ENCODE measurements at regions of chr3 and their contacts with region 1.

Region 1: DNA sequence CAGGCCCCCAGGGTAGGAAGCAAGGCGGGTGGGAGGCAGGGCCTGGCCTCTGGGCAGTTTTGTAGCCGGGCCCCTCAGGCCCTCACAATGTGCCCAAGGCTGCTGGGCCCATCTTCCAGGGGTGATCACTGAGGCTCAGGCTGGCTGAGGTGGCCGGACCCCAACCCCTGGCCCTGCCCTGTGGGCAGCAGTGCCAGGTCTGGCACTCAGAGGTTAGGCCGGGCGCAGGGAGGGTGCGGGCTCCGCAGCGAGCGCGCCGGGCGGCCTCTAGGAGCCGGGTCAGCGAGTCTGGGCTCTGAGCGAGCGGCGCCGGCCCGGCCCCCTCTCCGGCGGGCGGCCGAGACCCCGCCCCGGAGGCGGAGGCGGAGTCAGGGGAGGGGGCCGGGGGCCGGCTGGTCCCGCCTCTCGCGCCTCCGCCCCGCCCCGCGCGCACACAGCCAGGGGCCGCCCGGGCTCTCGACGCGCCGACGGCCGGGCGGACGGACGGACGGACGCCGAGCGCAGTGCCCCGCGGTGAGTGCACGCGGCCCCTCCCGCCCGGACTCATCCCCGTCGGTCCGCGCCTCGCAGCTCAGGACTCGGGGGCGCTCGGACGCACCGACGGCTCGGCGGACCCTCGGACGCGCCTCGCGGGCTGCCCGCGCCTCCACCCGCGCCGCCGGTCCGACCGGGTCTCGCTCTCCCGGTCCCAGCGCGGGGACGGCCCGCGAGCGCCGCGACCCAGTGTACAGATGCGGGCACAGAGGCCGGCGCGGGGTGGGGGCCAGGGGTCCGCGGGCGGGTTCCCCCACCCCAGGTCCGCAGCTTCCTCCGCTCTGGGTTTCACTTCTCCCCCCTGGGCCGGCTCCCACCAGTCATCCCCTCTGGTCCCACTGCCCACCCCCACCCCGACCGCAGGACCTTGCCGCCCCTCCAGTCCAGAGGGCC is at the start of gene FBLN2:
- DNase-seq: no peak
- ATAC-seq: peak; percentile 83
- total RNA-seq, gene FBLN2: 81.1 TPM

Region 2: DNA sequence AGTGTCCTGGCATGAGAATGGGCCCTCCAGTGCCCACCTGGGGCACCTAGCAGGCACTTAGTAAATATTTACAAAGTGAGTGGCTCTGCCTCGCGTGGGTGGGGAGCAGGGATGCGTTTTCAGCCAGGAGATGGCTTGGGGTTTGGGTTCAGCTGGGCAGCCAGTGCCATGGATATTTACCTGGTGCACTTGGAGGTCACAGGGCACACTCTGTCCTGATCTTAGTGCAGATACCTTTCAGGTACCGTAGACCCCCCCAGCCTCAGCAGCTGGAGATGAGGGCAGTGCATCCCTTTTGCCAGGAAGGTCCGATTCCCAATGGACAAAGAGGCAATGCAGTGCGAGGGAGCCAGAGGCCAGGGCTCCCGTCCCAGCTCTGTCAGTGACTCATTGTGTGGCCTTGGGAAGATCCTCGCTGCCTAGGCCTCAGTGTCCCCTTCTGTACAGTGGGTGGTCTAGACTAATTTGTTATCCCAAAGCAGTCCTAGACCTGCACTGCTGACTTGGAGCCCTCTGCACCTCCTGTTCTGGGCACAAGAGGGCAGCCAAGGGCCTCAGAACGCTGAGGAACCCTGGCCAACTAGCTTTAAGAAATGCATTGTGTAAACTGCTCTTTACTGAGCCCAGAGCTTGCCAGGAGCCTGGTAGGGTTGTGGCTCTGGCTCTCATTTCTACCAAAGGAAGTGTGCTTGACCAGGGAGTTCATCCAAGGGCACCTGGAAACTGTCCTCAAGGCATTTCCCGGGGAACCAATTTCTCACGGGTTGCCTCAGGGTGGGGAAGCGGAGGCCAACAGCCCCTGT is 52.8 kb before region 1 on chr3:
- intact Hi-C with region 1: loop called (anchors 5 kb)
- DNase-seq: peak; percentile 86
- ATAC-seq: peak; percentile 92

Region 3: GRCh38 chr3:13573884-13574797 is 25.2 kb after region 1 on chr3:
- intact Hi-C with region 1: no loop called
- DNase-seq: no peak
- ATAC-seq: no peak